ENCODE measurements at regions of chr2 and their contacts with region 1.

Region 1: GRCh38 chr2:152335010-152335725 is at the start of gene FMNL2:
- DNase-seq: peak; percentile 68
- H3K4me3 Mint-ChIP-seq: peak within 1 kb of the TSS; percentile 72
- H3K27ac Mint-ChIP-seq: no peak within 1 kb of the TSS
- H3K4me1 Mint-ChIP-seq: peaks cover 13% of the 10 kb centered on the region
- H3K27me3 Mint-ChIP-seq: peaks cover 41% of the 10 kb centered on the region
- total RNA-seq, gene FMNL2: 2.2 TPM

Region 2: DNA sequence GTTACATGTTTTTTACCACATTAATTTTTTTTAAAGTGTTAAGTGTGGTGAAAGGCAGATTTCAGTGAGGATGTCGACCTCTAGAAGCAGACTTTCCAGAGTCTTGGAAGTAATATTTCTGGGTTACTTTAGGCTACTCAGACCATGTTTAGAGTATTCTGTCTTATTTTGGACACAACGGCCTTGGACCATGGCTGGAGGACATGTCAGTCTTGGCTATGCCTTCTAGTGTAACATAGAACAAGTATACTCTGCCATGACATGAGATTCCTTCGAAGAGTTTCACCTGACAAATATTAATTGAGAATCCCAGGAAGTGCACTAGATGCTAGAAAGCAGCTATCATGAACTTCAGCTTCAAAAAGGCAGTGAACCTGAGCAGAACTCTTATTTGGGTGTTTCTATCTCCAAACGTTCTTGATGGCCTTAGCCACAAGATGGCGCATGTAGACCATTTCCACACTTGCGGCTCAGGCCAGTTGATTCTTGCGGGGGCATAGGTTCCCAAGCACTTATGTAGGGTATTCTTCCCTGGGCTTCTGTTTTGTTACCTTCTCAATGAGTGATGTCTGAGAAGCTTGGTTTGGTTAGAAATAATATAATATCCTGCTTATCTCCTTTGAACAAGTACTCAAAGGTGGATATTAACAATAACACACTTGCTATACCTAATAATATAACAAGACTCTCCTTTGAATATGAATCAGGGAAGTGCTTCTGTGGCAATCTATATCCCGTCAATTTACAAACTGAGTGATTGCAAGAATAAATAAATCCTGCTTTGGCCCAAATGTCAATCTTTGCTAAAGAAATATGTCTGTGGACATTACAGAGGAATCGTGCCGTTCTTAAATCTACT is 298.3 kb before region 1 on chr2:
- CTCF ChIA-PET with region 1: no interaction called
- POLR2A ChIA-PET with region 1: no interaction called
- intact Hi-C with region 1: loop called (anchors 10 kb)
- DNase-seq: peak; percentile 69
- H3K4me3 Mint-ChIP-seq: no peak overlapping the region
- H3K27ac Mint-ChIP-seq: no peak overlapping the region
- H3K4me1 Mint-ChIP-seq: no peaks in the 10 kb centered on the region
- H3K27me3 Mint-ChIP-seq: no peaks in the 10 kb centered on the region

Region 3: DNA sequence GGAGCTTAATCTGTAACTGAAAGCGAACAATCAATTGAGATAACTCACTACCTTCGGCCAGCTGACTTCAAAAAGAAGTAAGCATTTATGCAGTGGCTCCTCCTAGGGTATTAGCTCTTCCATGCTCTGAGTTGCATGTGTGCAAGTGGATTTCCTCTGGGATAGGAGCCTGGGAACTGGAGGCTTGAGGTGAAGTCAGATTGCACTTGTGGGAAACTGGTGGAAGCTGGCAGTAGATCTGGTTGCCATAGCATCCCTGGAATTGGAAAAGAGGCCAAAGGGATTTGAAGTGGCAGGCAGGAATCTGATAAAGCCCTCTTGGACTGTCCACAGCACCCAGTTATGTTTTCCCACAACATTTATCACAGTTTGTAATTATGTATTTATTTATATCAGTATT is 50.8 kb before region 1 on chr2:
- CTCF ChIA-PET with region 1: no interaction called
- POLR2A ChIA-PET with region 1: no interaction called
- intact Hi-C with region 1: no loop called
- DNase-seq: no peak
- H3K4me3 Mint-ChIP-seq: no peak overlapping the region
- H3K27ac Mint-ChIP-seq: no peak overlapping the region
- H3K4me1 Mint-ChIP-seq: no peaks in the 10 kb centered on the region
- H3K27me3 Mint-ChIP-seq: peaks cover 2% of the 10 kb centered on the region

Region 4: DNA sequence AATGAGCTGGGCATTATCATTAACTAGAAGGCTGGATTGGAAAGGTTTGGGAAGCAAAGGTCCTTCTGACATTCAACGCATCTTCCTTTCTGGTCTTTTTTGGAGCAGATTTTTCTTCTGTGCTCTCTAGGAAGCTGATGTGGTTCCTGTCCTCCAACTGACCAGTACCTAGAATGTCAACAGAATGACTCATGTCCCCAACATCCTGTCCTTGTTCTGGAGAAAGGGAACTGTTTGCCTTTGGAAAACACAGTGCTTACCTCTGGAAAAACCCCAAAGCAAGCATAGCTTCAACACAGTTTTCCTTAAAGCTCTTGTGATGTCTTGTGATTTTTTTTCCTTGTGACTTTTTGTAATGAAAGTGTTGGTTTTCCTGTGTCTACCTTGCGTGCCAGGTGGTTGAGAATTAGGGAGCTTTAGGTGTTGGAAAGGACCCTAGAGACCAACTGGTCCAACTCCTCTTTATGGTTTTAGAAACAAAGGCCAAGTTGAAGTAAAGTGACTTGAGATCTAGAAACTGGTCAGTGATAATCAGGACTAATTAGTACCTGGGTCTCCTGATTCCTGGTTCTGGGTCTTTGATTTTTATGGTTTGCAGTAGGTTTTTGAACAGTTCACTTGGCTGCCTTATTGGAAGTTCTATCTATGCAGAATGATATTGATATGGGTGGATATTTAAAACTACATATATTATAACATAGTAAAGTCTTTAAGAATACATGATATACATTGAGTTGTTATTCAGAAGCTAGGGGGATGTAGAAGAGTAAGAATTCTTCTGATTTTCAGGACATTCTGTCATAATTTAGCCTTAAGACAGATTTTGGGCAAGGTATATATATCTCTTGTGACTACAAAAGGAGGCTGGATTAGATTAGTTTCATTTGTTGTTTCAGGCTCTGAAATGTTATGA is 70.3 kb after region 1 on chr2:
- CTCF ChIA-PET with region 1: no interaction called
- POLR2A ChIA-PET with region 1: no interaction called
- intact Hi-C with region 1: loop called (anchors 5 kb)
- DNase-seq: no peak
- H3K4me3 Mint-ChIP-seq: no peak overlapping the region
- H3K27ac Mint-ChIP-seq: no peak overlapping the region
- H3K4me1 Mint-ChIP-seq: peaks cover 29% of the 10 kb centered on the region
- H3K27me3 Mint-ChIP-seq: peaks cover 24% of the 10 kb centered on the region

Region 5: GRCh38 chr2:152421521-152422370 is 86.6 kb after region 1 on chr2:
- CTCF ChIA-PET with region 1: no interaction called
- POLR2A ChIA-PET with region 1: no interaction called
- intact Hi-C with region 1: loop called (anchors 5 kb)
- DNase-seq: peak; percentile 15
- H3K4me3 Mint-ChIP-seq: no peak overlapping the region
- H3K27ac Mint-ChIP-seq: no peak overlapping the region
- H3K4me1 Mint-ChIP-seq: peaks cover 15% of the 10 kb centered on the region
- H3K27me3 Mint-ChIP-seq: peaks cover 29% of the 10 kb centered on the region

Region 6: GRCh38 chr2:152573168-152573567 is 238.0 kb after region 1 on chr2:
- CTCF ChIA-PET with region 1: no interaction called
- POLR2A ChIA-PET with region 1: no interaction called
- intact Hi-C with region 1: loop called (anchors 5 kb)
- DNase-seq: peak; percentile 70
- H3K4me3 Mint-ChIP-seq: no peak overlapping the region
- H3K27ac Mint-ChIP-seq: peak overlapping the region; percentile 35
- H3K4me1 Mint-ChIP-seq: peaks cover 10% of the 10 kb centered on the region
- H3K27me3 Mint-ChIP-seq: peaks cover 14% of the 10 kb centered on the region

Region 7: GRCh38 chr2:152635635-152636298 is 300.6 kb after region 1 on chr2:
- CTCF ChIA-PET with region 1: no interaction called
- POLR2A ChIA-PET with region 1: no interaction called
- intact Hi-C with region 1: loop called (anchors 10 kb)
- DNase-seq: peak; percentile 69
- H3K4me3 Mint-ChIP-seq: no peak overlapping the region
- H3K27ac Mint-ChIP-seq: no peak overlapping the region
- H3K4me1 Mint-ChIP-seq: no peaks in the 10 kb centered on the region
- H3K27me3 Mint-ChIP-seq: peaks cover 7% of the 10 kb centered on the region

Region 8: DNA sequence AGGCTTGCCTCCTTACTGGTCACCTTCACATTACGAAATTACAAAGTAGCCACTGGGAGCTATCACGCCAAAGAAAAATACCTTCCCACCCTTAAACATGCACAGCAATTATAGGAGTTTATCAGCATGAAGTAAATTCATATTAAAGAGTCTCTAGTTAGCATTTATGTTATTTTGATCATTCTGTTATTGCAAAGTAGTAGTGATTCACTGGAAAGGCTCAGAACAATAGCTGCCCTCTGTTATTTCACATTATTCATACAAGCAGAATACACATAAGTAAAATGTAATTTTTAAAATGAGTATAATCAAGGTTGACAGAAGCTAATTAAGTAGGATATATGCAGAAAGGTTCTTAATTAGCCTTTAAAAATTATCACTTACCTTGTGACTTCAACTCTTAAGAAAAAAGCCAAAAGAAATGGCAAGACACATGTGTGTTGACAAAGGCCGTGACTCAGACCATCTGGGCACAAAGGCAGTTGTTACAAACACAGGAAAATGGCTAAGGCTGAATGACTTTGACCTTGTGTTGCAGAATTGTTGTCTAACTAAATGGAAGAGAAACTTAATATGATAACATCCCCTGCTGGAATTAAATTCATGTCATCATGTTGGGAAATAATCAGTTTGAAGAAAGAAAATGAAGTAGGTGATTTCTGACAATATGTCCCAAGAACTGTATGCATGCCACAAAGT is 491.6 kb after region 1 on chr2:
- CTCF ChIA-PET with region 1: no interaction called
- POLR2A ChIA-PET with region 1: no interaction called
- intact Hi-C with region 1: no loop called
- DNase-seq: no peak
- H3K4me3 Mint-ChIP-seq: no peak overlapping the region
- H3K27ac Mint-ChIP-seq: no peak overlapping the region
- H3K4me1 Mint-ChIP-seq: no peaks in the 10 kb centered on the region
- H3K27me3 Mint-ChIP-seq: no peaks in the 10 kb centered on the region